ENCODE measurements at regions of chr1 and their contacts with region 1.

Region 1: GRCh38 chr1:109984456-109985275 is at the start of gene AHCYL1:
- DNase-seq: peak; percentile 97
- H3K4me3 Mint-ChIP-seq: peak within 1 kb of the TSS; percentile 88
- H3K27ac Mint-ChIP-seq: peak within 1 kb of the TSS; percentile 75
- H3K4me1 Mint-ChIP-seq: peaks cover 28% of the 10 kb centered on the region
- H3K27me3 Mint-ChIP-seq: no peaks in the 10 kb centered on the region
- CTCF ChIP-seq: peak; percentile 83
- total RNA-seq, gene AHCYL1: 54.2 and 56.5 TPM in 2 replicates

Region 2: DNA sequence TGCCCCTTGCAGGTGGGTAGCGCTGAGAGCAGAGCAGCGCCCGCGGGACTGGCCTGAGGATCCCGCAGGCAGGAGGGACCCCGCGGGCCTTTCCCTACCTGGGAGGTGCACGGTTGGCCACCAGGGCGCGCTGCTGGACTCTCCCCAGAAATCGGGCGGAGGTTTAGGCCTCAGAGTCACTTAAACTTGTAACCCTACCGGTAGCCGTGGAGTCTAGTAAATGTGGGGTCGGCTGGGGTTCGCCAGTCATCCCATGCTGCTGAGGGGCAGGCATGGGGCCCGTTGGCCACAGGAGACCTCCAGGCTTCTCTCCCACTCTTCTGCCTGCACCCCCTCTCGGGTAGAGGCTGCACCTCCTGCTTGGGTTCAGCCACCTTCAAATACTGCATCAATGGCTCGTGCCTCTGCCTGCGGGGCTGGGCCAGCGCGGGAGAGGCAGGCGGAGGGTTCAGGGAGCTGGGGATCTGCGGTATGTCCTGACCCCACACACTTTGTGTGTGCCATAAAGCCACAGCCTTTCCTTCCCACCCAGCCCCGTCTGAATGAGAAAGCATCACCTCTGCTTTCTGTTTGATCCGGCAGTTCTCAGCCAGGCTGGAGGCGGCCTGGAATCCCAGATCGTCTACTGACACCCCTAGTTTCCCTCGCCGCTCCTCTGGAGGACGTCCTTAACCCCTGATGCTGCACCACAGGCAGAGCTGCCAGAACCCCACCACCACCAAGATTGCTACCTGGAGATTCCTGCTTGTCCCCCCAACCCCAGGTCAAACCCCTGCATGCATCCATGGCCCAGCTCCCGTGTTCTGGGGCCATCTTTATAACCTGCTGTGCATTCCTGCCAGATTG is 341.1 kb before region 1 on chr1:
- CTCF ChIA-PET with region 1: interaction called, 15 read pairs
- intact Hi-C with region 1: loop called (anchors 5 kb)
- DNase-seq: peak; percentile 88
- H3K4me3 Mint-ChIP-seq: no peak overlapping the region
- H3K27ac Mint-ChIP-seq: no peak overlapping the region
- H3K4me1 Mint-ChIP-seq: peaks cover 16% of the 10 kb centered on the region
- H3K27me3 Mint-ChIP-seq: no peaks in the 10 kb centered on the region
- CTCF ChIP-seq: peak; percentile 64

Region 3: DNA sequence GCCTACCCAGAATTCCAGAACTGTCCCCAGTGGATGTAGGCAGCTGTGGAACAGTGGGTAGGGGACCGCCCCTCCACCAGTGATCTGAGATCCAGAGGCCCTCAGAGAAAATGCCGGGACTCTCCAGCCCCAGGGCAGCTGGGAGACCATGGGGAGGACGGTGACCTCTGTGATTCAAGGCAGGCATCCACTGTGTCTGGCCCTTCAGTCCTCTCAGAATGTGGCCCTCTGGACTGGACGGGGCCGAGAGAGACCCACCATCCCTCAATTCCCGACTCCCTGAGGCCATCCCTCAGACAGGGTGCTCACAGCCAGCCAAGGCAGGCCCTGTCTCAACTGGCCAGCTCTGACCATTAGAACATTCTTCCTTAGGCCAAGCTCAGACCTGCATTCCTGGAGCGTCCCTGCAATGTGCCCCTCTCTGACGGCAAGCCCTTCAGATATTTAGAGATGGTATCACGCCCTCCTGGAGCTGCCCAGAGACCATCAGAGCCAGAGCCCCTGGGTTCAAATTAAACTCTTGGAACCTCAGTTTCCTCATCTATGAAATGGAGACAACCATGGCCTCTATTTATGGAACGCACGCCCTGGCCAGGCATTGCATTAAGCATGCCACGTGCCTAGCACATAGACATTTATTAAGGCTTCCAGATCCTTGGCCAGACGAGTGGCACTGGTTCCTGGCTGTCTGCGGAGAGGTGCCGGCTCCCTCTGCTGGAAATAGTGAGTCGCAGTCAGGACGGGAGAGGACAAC is 211.3 kb before region 1 on chr1:
- CTCF ChIA-PET with region 1: interaction called, 101 read pairs
- intact Hi-C with region 1: loop called (anchors 1 kb)
- DNase-seq: peak; percentile 72
- H3K4me3 Mint-ChIP-seq: no peak overlapping the region
- H3K27ac Mint-ChIP-seq: no peak overlapping the region
- H3K4me1 Mint-ChIP-seq: no peaks in the 10 kb centered on the region
- H3K27me3 Mint-ChIP-seq: peaks cover 14% of the 10 kb centered on the region
- CTCF ChIP-seq: peak; percentile 52

Region 4: DNA sequence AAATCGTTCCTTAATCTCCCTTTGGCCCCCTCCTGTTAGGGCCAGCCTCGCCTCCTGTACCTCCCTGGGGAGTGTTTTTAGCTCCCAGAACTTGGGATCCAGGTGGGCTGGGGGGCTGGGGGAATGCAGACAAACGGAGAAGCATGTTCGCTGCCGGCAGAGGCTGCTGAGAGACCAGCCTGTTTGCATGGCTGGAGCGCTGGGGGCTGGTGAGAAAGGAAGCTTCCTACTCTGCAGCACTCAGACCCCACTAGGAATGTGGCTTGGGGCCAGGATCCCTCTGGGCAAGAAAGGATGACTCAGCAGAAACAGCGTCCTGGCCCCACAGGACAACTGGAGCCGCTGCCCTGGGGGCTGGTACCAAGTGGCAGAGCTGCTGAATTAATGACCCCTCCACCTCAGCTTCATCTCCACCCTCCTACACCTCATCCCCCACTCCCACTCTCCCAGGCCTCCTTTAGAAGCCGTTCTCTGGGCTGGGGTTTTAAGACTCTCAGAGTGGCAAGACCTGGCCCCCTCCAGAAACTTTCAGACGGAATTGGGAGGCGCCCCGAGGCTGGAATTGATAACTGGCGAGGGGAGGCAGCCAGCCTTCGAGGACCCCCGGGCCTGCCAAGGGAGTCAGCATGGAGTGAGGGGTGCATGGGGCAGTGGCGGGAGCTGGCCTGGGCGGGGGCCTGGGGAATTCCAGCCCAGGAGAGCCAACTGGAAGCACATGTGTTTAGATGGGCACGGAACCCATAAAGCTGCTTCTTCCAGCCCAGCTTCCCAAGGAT is 192.4 kb before region 1 on chr1:
- CTCF ChIA-PET with region 1: interaction called, 13 read pairs
- intact Hi-C with region 1: no loop called
- DNase-seq: peak; percentile 59
- H3K4me3 Mint-ChIP-seq: no peak overlapping the region
- H3K27ac Mint-ChIP-seq: no peak overlapping the region
- H3K4me1 Mint-ChIP-seq: peaks cover 41% of the 10 kb centered on the region
- H3K27me3 Mint-ChIP-seq: no peaks in the 10 kb centered on the region
- CTCF ChIP-seq: no peak

Region 5: GRCh38 chr1:110003747-110004630 is 19.3 kb after region 1 on chr1:
- CTCF ChIA-PET with region 1: interaction called, 12 read pairs
- intact Hi-C with region 1: no loop called
- DNase-seq: peak; percentile 56
- H3K4me3 Mint-ChIP-seq: peak overlapping the region; percentile 67
- H3K27ac Mint-ChIP-seq: peak overlapping the region; percentile 83
- H3K4me1 Mint-ChIP-seq: peaks cover 37% of the 10 kb centered on the region
- H3K27me3 Mint-ChIP-seq: no peaks in the 10 kb centered on the region
- CTCF ChIP-seq: no peak

Region 6: DNA sequence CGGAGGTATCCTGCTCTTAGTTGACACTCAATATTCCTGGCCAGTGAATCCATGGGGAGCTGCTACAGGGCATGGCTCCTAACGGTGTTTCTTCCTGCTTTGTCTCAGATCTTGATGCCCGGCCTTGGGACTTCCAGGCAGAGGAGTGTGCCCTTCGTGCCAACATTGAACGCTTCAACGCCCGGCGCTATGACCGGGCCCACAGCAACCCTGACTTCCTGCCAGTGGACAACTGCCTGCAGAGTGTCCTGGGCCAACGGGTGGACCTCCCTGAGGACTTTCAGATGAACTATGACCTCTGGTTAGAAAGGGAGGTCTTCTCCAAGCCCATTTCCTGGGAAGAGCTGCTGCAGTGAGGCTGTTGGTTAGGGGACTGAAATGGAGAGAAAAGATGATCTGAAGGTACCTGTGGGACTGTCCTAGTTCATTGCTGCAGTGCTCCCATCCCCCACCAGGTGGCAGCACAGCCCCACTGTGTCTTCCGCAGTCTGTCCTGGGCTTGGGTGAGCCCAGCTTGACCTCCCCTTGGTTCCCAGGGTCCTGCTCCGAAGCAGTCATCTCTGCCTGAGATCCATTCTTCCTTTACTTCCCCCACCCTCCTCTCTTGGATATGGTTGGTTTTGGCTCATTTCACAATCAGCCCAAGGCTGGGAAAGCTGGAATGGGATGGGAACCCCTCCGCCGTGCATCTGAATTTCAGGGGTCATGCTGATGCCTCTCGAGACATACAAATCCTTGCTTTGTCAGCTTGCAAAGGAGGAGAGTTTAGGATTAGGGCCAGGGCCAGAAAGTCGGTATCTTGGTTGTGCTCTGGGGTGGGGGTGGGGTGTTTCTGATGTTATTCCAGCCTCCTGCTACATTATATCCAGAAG is 69.1 kb after region 1 on chr1:
- CTCF ChIA-PET with region 1: no interaction called
- intact Hi-C with region 1: no loop called
- DNase-seq: peak; percentile 68
- H3K4me3 Mint-ChIP-seq: no peak overlapping the region
- H3K27ac Mint-ChIP-seq: no peak overlapping the region
- H3K4me1 Mint-ChIP-seq: peaks cover 3% of the 10 kb centered on the region
- H3K27me3 Mint-ChIP-seq: no peaks in the 10 kb centered on the region
- CTCF ChIP-seq: peak; percentile 71